Sigmoid colon (tissue), 7 donors: ENCODE measurements at regions of chr1 and their contacts with region 1.

Region 1: GRCh38 chr1:77126307-77126706 is 92.9 kb downstream of the PIGK start:
- DNase-seq: no peak
- H3K4me3 ChIP-seq: no peak overlapping the region
- H3K27ac ChIP-seq: no peak overlapping the region
- H3K4me1 ChIP-seq: no peaks in the 10 kb centered on the region
- H3K27me3 ChIP-seq: no peaks in the 10 kb centered on the region
- CTCF ChIP-seq: peak in 3 of 4 experiments; percentile 33 to 49 (median 42)
- EP300 ChIP-seq: no peak
- POLR2A ChIP-seq: no peak

Region 2: DNA sequence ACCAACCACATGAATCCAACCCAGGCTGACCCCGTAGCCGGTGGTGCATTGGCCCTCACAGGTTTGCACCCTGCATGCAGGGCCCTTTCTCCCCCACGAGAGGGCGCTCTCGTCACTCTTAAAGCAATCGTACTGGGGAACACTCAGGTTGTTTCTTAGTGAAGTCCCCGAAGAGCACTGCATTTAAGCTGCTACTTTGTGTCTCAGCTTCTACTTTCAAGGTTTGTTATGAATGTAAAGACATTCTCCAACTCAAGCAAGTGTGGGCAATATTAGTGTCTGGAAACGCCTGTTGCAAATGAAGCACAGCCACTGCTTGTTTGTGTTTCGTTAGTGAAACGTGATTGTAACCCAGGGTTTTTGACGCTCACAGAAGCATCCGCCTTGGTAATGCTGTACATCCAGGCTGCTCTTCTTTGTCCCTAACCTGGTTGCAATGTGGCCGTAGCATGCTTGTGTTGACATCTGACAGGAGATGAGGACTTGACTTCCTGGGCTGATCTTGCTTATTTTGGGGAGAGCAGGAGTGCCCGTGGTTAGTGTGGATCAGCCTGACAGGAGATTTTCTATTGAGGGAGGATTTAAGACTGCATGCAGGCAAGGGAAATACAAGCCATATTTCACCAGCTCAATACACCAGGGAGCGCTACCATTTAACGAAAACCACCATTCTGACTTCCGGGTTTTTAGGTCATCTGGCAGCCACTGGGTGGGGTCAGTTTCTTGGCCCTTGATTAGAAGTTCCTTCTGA is 971.9 kb before region 1 on chr1:
- intact Hi-C with region 1: loop called (anchors 10 kb)
- DNase-seq: peak; percentile 83
- H3K4me3 ChIP-seq: peak overlapping the region in 3 of 4 donors; percentile 28 to 36 (median 30)
- H3K27ac ChIP-seq: peak overlapping the region in 2 of 4 donors; percentile 4 to 37
- H3K4me1 ChIP-seq: peaks cover 0 to 14% (median 4%) of the 10 kb centered on the region in 4 donors
- H3K27me3 ChIP-seq: no peaks in the 10 kb centered on the region
- CTCF ChIP-seq: peak; percentile 29 to 94 (median 82)
- EP300 ChIP-seq: no peak
- POLR2A ChIP-seq: no peak

Region 3: DNA sequence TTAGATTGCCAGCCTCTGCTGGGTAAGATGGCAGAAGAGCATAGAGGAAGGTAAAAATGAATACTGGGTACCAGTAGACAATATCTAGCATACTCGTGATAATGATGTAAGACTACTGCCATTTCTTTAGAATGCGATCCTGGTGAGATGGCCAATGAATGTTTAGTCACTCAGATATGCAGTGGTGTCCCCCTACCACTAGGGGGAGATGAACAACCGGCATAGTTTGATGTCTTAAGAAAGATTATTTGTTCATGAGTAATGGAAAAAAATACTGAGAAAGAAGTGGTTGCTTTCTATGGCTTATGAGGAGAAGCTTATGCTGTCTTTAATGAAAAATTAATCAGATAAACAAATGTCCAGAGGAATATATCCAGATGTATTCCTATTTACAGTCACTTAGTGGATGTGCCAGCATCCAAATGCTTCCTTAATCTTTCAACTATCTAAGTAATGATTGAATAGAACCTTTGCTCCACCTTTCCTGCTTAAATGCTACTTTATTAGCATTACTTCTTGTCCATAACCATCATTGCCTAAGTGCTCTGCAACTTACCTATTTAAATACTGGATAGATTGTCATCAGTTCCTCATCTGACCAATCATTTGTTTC is 795.2 kb before region 1 on chr1:
- intact Hi-C with region 1: loop called (anchors 5 kb)
- DNase-seq: no peak
- H3K4me3 ChIP-seq: no peak overlapping the region
- H3K27ac ChIP-seq: no peak overlapping the region
- H3K4me1 ChIP-seq: peaks cover 0 to 3% (median 0%) of the 10 kb centered on the region in 4 donors
- H3K27me3 ChIP-seq: no peaks in the 10 kb centered on the region
- CTCF ChIP-seq: peak; percentile 10 to 69 (median 63)
- EP300 ChIP-seq: no peak
- POLR2A ChIP-seq: no peak